Endothelial cell of umbilical vein (primary cell): ENCODE measurements at regions of chr11 and their contacts with region 1.

Region 1: GRCh38 chr11:34174412-34175041 is 69.1 kb downstream of the NAT10 start:
- DNase-seq: peak; percentile 55
- H3K4me3 ChIP-seq: no peak overlapping the region
- H3K27ac ChIP-seq: no peak overlapping the region
- H3K4me1 ChIP-seq: peaks cover 3% of the 10 kb centered on the region
- H3K27me3 ChIP-seq: peaks cover 3 to 5% of the 10 kb centered on the region in 2 experiments
- CTCF ChIP-seq: peak; percentile 78 to 99
- POLR2A ChIP-seq: no peak

Region 2: GRCh38 chr11:34185926-34186841 is 11.7 kb after region 1 on chr11:
- CTCF ChIA-PET with region 1: interaction called, 20 read pairs
- POLR2A ChIA-PET with region 1: no interaction called
- dilution Hi-C with region 1: no loop called
- intact Hi-C with region 1: no loop called
- DNase-seq: no peak
- H3K4me3 ChIP-seq: no peak overlapping the region
- H3K27ac ChIP-seq: no peak overlapping the region
- H3K4me1 ChIP-seq: no peaks in the 10 kb centered on the region
- H3K27me3 ChIP-seq: peaks cover 2 to 3% of the 10 kb centered on the region in 2 experiments
- CTCF ChIP-seq: no peak
- POLR2A ChIP-seq: no peak

Region 3: GRCh38 chr11:34242037-34242625 is 67.6 kb after region 1 on chr11:
- CTCF ChIA-PET with region 1: no interaction called
- POLR2A ChIA-PET with region 1: no interaction called
- dilution Hi-C with region 1: no loop called
- intact Hi-C with region 1: no loop called
- DNase-seq: no peak
- H3K4me3 ChIP-seq: no peak overlapping the region
- H3K27ac ChIP-seq: no peak overlapping the region
- H3K4me1 ChIP-seq: no peaks in the 10 kb centered on the region
- H3K27me3 ChIP-seq: no peaks in the 10 kb centered on the region
- CTCF ChIP-seq: no peak
- POLR2A ChIP-seq: no peak

Region 4: DNA sequence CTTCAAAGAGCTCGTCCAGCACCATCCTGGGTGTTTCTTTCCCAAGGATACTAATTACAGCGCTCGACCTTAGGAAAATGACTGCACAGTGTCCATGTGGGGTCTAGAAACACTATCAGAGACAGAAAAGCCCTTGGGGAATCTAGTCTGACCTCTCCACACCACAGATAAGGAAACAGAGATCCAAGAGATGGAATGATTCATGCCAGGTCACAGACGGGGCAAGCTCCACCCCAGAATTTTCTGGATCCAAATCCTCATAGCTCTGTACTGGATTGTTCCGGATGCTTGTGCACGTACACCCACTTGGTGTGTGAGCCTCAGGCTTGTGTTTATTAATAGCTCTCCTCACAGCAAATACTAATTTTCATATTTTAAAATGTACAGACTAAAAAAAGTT is 172.0 kb after region 1 on chr11:
- CTCF ChIA-PET with region 1: interaction called, 11 read pairs
- POLR2A ChIA-PET with region 1: no interaction called
- dilution Hi-C with region 1: no loop called
- intact Hi-C with region 1: no loop called
- DNase-seq: no peak
- H3K4me3 ChIP-seq: no peak overlapping the region
- H3K27ac ChIP-seq: no peak overlapping the region
- H3K4me1 ChIP-seq: no peaks in the 10 kb centered on the region
- H3K27me3 ChIP-seq: no peaks in the 10 kb centered on the region
- CTCF ChIP-seq: no peak
- POLR2A ChIP-seq: no peak

Region 5: GRCh38 chr11:34366522-34366921 is 192.0 kb after region 1 on chr11:
- CTCF ChIA-PET with region 1: interaction called, 29 read pairs
- POLR2A ChIA-PET with region 1: no interaction called
- dilution Hi-C with region 1: no loop called
- intact Hi-C with region 1: no loop called
- DNase-seq: peak; percentile 14
- H3K4me3 ChIP-seq: no peak overlapping the region
- H3K27ac ChIP-seq: no peak overlapping the region
- H3K4me1 ChIP-seq: no peaks in the 10 kb centered on the region
- H3K27me3 ChIP-seq: peaks cover 6 to 14% of the 10 kb centered on the region in 2 experiments
- CTCF ChIP-seq: no peak
- POLR2A ChIP-seq: no peak

Region 6: GRCh38 chr11:34492806-34493414 is 318.4 kb after region 1 on chr11:
- CTCF ChIA-PET with region 1: interaction called, 38 read pairs
- POLR2A ChIA-PET with region 1: no interaction called
- dilution Hi-C with region 1: no loop called
- intact Hi-C with region 1: loop called (anchors 1 kb)
- DNase-seq: peak; percentile 64
- H3K4me3 ChIP-seq: no peak overlapping the region
- H3K27ac ChIP-seq: no peak overlapping the region
- H3K4me1 ChIP-seq: no peaks in the 10 kb centered on the region
- H3K27me3 ChIP-seq: peaks cover 6% of the 10 kb centered on the region in 2 experiments
- CTCF ChIP-seq: peak; percentile 42 to 50
- POLR2A ChIP-seq: no peak